Calu3 (cell line): ENCODE measurements at regions of chr3 and their contacts with region 1.

Region 1: GRCh38 chr3:110666495-110667128 is 405.0 kb upstream of the NECTIN3 start:
- DNase-seq: peak; percentile 51
- H3K4me3 Mint-ChIP-seq: peak overlapping the region; percentile 69
- H3K27ac Mint-ChIP-seq: peak overlapping the region; percentile 97
- H3K4me1 Mint-ChIP-seq: peaks cover 53% of the 10 kb centered on the region
- H3K27me3 Mint-ChIP-seq: no peaks in the 10 kb centered on the region
- CTCF ChIP-seq: no peak

Region 2: GRCh38 chr3:110583373-110583935 is 83.2 kb before region 1 on chr3:
- CTCF ChIA-PET with region 1: no interaction called
- intact Hi-C with region 1: loop called (anchors 1 kb)
- DNase-seq: peak; percentile 13
- H3K4me3 Mint-ChIP-seq: no peak overlapping the region
- H3K27ac Mint-ChIP-seq: peak overlapping the region; percentile 30
- H3K4me1 Mint-ChIP-seq: peaks cover 45% of the 10 kb centered on the region
- H3K27me3 Mint-ChIP-seq: no peaks in the 10 kb centered on the region
- CTCF ChIP-seq: no peak

Region 3: DNA sequence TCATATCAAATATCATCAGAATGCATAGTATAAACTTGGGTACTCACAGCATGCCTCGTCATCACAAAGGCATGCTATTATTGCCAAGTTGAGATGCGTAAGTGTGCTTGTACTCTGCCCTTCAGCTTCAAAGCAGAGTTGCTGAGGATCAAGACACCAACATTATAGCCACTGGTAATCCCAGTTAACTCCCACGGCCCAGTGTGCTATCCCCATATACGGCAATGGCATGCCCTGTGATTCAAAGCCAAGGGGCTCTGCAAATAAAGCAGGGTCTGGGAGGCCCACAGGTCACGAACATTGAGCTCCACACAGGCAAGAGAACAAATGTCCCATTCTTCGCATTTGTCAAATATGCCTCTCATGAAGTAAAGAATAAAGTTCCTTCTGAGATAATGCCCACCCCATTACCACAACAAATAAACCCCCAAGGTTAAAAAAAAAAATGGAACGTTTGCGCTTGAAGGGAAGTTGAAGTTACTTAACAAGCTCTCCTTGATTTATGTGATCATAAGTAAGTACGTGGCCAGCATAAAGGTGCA is 106.9 kb after region 1 on chr3:
- CTCF ChIA-PET with region 1: no interaction called
- intact Hi-C with region 1: loop called (anchors 2 kb)
- DNase-seq: peak; percentile 68
- H3K4me3 Mint-ChIP-seq: no peak overlapping the region
- H3K27ac Mint-ChIP-seq: peak overlapping the region; percentile 58
- H3K4me1 Mint-ChIP-seq: peaks cover 24% of the 10 kb centered on the region
- H3K27me3 Mint-ChIP-seq: no peaks in the 10 kb centered on the region
- CTCF ChIP-seq: no peak